Mammary epithelial cell (primary cell): ENCODE measurements at regions of chr20 and their contacts with region 1.

Region 1: GRCh38 chr20:62350093-62350628 is 17.0 kb downstream of the LAMA5 start:
- DNase-seq: peak; percentile 94
- H3K4me3 ChIP-seq: no peak overlapping the region
- H3K27ac ChIP-seq: peak overlapping the region; percentile 77
- H3K4me1 ChIP-seq: peaks cover 50% of the 10 kb centered on the region
- H3K27me3 ChIP-seq: no peaks in the 10 kb centered on the region
- CTCF ChIP-seq: no peak

Region 2: GRCh38 chr20:62276439-62276838 is 73.7 kb before region 1 on chr20:
- CTCF ChIA-PET with region 1: no interaction called
- dilution Hi-C with region 1: no loop called
- in situ Hi-C with region 1: no loop called
- intact Hi-C with region 1: no loop called
- DNase-seq: no peak
- H3K4me3 ChIP-seq: no peak overlapping the region
- H3K27ac ChIP-seq: no peak overlapping the region
- H3K4me1 ChIP-seq: no peaks in the 10 kb centered on the region
- H3K27me3 ChIP-seq: no peaks in the 10 kb centered on the region
- CTCF ChIP-seq: no peak

Region 3: GRCh38 chr20:62316331-62317166 is 33.6 kb before region 1 on chr20:
- CTCF ChIA-PET with region 1: no interaction called
- dilution Hi-C with region 1: no loop called
- in situ Hi-C with region 1: no loop called
- intact Hi-C with region 1: loop called (anchors 2 kb)
- DNase-seq: peak; percentile 78
- H3K4me3 ChIP-seq: no peak overlapping the region
- H3K27ac ChIP-seq: no peak overlapping the region
- H3K4me1 ChIP-seq: peaks cover 15% of the 10 kb centered on the region
- H3K27me3 ChIP-seq: no peaks in the 10 kb centered on the region
- CTCF ChIP-seq: no peak

Region 4: GRCh38 chr20:62365814-62366309 is 15.7 kb after region 1 on chr20:
- CTCF ChIA-PET with region 1: no interaction called
- dilution Hi-C with region 1: no loop called
- in situ Hi-C with region 1: no loop called
- intact Hi-C with region 1: loop called (anchors 1 kb)
- DNase-seq: peak; percentile 75
- H3K4me3 ChIP-seq: peak overlapping the region; percentile 69 to 77 (median 76)
- H3K27ac ChIP-seq: peak overlapping the region; percentile 30
- H3K4me1 ChIP-seq: peaks cover 83% of the 10 kb centered on the region
- H3K27me3 ChIP-seq: no peaks in the 10 kb centered on the region
- CTCF ChIP-seq: no peak

Region 5: GRCh38 chr20:62377615-62378178 is 27.5 kb after region 1 on chr20:
- CTCF ChIA-PET with region 1: interaction called, 7 read pairs
- dilution Hi-C with region 1: no loop called
- in situ Hi-C with region 1: no loop called
- intact Hi-C with region 1: loop called (anchors 1 kb)
- DNase-seq: no peak
- H3K4me3 ChIP-seq: peak overlapping the region in 2 of 3 experiments; percentile 26 to 37
- H3K27ac ChIP-seq: peak overlapping the region; percentile 78
- H3K4me1 ChIP-seq: peaks cover 57% of the 10 kb centered on the region
- H3K27me3 ChIP-seq: no peaks in the 10 kb centered on the region
- CTCF ChIP-seq: no peak